PC-9 (cell line): ENCODE measurements at regions of chr1 and their contacts with region 1.

Region 1: GRCh38 chr1:94335950-94336349 is 82.2 kb upstream of the ABCD3 start:
- DNase-seq: peak; percentile 67 to 95
- H3K4me3 ChIP-seq: no peak overlapping the region
- H3K27ac ChIP-seq: peak overlapping the region; percentile 22; the same call in 1 of the 2 replicates
- H3K4me1 ChIP-seq: peaks cover 55% of the 10 kb centered on the region
- H3K27me3 ChIP-seq: no peaks in the 10 kb centered on the region
- CTCF ChIP-seq: peak; percentile 99

Region 2: DNA sequence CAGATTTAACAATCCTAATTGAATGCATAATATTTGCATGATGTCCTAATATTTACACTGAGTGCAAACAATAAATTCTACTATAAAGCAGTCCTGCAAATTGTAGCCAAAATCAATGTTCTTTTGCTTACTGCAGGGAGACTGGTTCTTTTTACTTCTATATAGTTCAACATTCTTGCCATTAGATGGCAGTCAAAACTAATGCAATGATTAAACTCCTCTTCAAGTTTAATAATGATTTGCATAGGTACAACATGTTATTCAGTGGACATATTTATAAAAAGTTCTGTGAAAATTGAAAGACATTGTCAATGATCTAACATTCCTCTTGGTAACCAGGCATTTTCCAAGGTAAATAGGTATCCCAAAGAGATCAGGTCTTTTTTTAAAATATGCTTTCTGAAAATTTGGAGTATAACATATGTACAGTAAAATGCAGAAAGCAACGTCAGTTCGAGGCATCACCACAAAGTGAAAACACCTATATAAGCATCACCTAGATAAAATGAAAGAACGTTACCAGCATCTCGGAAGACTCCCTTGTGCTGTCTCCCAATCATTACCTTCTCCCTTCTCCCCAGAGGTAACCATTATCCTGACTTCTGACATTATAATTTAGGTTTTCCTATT is 897.9 kb before region 1 on chr1:
- CTCF ChIA-PET with region 1: no interaction called
- POLR2A ChIA-PET with region 1: no interaction called
- intact Hi-C with region 1: loop called (anchors 2 kb)
- DNase-seq: peak in 1 of 2 experiments; percentile 70
- H3K4me3 ChIP-seq: no peak overlapping the region
- H3K27ac ChIP-seq: no peak overlapping the region
- H3K4me1 ChIP-seq: peaks cover 14% of the 10 kb centered on the region
- H3K27me3 ChIP-seq: no peaks in the 10 kb centered on the region
- CTCF ChIP-seq: peak; percentile 96

Region 3: DNA sequence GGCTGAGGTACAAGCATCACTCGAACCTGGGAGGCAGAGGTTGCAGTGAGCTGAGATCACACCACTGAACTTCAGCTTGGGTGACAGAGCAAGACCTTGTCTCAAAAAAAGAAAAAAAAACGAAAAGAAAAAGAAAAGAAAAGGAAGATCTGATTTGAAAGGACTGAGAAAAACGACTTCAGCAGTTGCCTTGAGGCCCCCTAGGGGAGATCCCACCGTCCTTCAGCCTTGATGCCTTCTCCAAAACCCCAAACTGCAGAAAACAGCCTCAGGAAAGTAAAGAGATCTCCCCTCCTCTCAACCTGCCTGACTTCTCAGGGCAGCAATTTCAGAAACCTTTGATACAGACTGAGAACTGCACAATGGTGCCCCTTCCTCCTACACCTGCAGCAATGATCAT is 603.4 kb before region 1 on chr1:
- CTCF ChIA-PET with region 1: no interaction called
- POLR2A ChIA-PET with region 1: no interaction called
- intact Hi-C with region 1: no loop called
- DNase-seq: no peak
- H3K4me3 ChIP-seq: no peak overlapping the region
- H3K27ac ChIP-seq: no peak overlapping the region
- H3K4me1 ChIP-seq: peaks cover 17% of the 10 kb centered on the region
- H3K27me3 ChIP-seq: no peaks in the 10 kb centered on the region
- CTCF ChIP-seq: peak; percentile 28; the same call in 1 of the 2 replicates

Region 4: GRCh38 chr1:93909146-93910050 is 426.6 kb before region 1 on chr1 and contains the start of gene GCLM:
- CTCF ChIA-PET with region 1: no interaction called
- POLR2A ChIA-PET with region 1: no interaction called
- intact Hi-C with region 1: loop called (anchors 1 kb)
- DNase-seq: peak; percentile 94 to 97
- H3K4me3 ChIP-seq: peak within 1 kb of the TSS; percentile 68
- H3K27ac ChIP-seq: peak within 1 kb of the TSS; percentile 80
- H3K4me1 ChIP-seq: peaks cover 32% of the 10 kb centered on the region
- H3K27me3 ChIP-seq: no peaks in the 10 kb centered on the region
- CTCF ChIP-seq: peak; percentile 80
- total RNA-seq, gene GCLM: 270 and 272 TPM in 2 replicates

Region 5: DNA sequence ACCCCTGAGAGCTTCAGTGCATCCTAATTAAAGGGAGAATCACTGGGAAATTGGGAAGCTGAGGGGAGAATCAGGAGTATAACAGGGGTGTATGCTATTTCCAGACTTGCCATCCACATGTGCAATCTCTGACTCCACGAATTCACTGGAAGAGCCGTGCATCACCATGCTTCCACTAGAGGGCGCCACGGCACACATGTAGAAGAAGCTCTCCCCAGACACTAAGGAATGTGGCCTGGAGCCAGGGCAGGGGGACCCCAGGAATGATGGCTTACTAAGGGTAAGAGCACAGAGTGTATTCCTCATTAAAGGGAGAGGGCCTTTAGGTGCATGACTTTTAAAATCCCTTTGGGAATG is 296.5 kb before region 1 on chr1:
- CTCF ChIA-PET with region 1: interaction called, 17 read pairs
- POLR2A ChIA-PET with region 1: no interaction called
- intact Hi-C with region 1: no loop called
- DNase-seq: peak; percentile 63 to 68
- H3K4me3 ChIP-seq: no peak overlapping the region
- H3K27ac ChIP-seq: no peak overlapping the region
- H3K4me1 ChIP-seq: peaks cover 40% of the 10 kb centered on the region
- H3K27me3 ChIP-seq: no peaks in the 10 kb centered on the region
- CTCF ChIP-seq: peak; percentile 99

Region 6: GRCh38 chr1:94061513-94062443 is 274.2 kb before region 1 on chr1:
- CTCF ChIA-PET with region 1: interaction called, 16 read pairs
- POLR2A ChIA-PET with region 1: interaction called, 3 read pairs
- intact Hi-C with region 1: loop called (anchors 1 kb)
- DNase-seq: peak; percentile 65 to 83
- H3K4me3 ChIP-seq: no peak overlapping the region
- H3K27ac ChIP-seq: peak overlapping the region; percentile 52
- H3K4me1 ChIP-seq: peaks cover 44% of the 10 kb centered on the region
- H3K27me3 ChIP-seq: no peaks in the 10 kb centered on the region
- CTCF ChIP-seq: peak; percentile 95

Region 7: DNA sequence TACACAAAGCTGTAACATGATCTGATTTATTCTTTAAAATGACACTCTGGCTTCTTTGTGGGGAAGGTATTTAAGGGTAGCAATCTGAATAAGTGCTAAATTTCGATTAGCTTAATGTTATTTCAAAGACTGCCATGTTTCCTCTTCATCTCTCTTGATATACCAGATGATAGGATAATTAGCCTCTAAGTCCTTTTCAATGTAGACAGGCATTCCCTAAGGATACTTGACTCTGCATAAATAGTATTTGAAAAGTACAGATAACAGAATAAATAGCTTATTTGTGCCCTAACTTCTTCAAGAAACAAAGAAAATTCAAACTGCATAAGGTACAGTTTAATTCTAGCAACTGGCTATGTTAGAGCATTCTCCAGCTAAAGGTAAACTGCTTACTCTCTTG is 144.7 kb before region 1 on chr1:
- CTCF ChIA-PET with region 1: interaction called, 4 read pairs
- POLR2A ChIA-PET with region 1: no interaction called
- intact Hi-C with region 1: loop called (anchors 5 kb)
- DNase-seq: no peak
- H3K4me3 ChIP-seq: no peak overlapping the region
- H3K27ac ChIP-seq: peak overlapping the region; percentile 40
- H3K4me1 ChIP-seq: peaks cover 3% of the 10 kb centered on the region; the same call in 1 of the 2 replicates
- H3K27me3 ChIP-seq: no peaks in the 10 kb centered on the region
- CTCF ChIP-seq: no peak

Region 8: GRCh38 chr1:94319319-94320180 is 16.4 kb before region 1 on chr1:
- CTCF ChIA-PET with region 1: no interaction called
- POLR2A ChIA-PET with region 1: no interaction called
- intact Hi-C with region 1: no loop called
- DNase-seq: no peak
- H3K4me3 ChIP-seq: no peak overlapping the region
- H3K27ac ChIP-seq: no peak overlapping the region
- H3K4me1 ChIP-seq: peaks cover 50% of the 10 kb centered on the region
- H3K27me3 ChIP-seq: no peaks in the 10 kb centered on the region
- CTCF ChIP-seq: no peak

Region 9: GRCh38 chr1:94417978-94418663 is 82.2 kb after region 1 on chr1 and contains the start of gene ABCD3:
- CTCF ChIA-PET with region 1: no interaction called
- POLR2A ChIA-PET with region 1: no interaction called
- intact Hi-C with region 1: loop called (anchors 5 kb)
- DNase-seq: peak; percentile 94 to 98
- H3K4me3 ChIP-seq: peak within 1 kb of the TSS; percentile 91
- H3K27ac ChIP-seq: peak within 1 kb of the TSS; percentile 45
- H3K4me1 ChIP-seq: peaks cover 47% of the 10 kb centered on the region
- H3K27me3 ChIP-seq: no peaks in the 10 kb centered on the region
- CTCF ChIP-seq: no peak
- total RNA-seq, gene ABCD3: 41.7 and 51.6 TPM in 2 replicates

Region 10: DNA sequence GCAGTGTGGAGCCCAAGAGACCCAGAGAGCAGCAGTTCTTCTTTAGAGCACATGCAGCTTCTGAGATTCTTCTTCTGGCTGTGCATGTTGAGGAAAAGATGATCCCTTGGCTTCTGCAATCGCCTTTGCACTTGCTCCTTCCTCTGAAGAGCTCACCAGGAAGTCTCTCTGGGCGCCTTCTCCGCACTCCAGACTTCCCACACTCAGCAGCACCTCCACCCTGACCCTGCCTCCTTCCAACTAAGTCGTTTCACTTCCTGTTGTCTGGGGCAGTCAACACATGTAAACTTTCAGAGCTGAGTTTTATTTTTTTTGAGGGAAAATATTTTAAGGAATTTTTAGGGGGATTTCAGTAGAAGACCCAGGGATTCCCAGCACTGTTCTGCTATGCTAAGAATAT is 279.0 kb after region 1 on chr1:
- CTCF ChIA-PET with region 1: no interaction called
- POLR2A ChIA-PET with region 1: no interaction called
- intact Hi-C with region 1: no loop called
- DNase-seq: no peak
- H3K4me3 ChIP-seq: no peak overlapping the region
- H3K27ac ChIP-seq: no peak overlapping the region
- H3K4me1 ChIP-seq: peaks cover 61% of the 10 kb centered on the region
- H3K27me3 ChIP-seq: no peaks in the 10 kb centered on the region
- CTCF ChIP-seq: no peak

Region 11: GRCh38 chr1:94648225-94649007 is 312.5 kb after region 1 on chr1:
- CTCF ChIA-PET with region 1: no interaction called
- POLR2A ChIA-PET with region 1: no interaction called
- intact Hi-C with region 1: no loop called
- DNase-seq: peak; percentile 79 to 100
- H3K4me3 ChIP-seq: peak overlapping the region; percentile 32; the same call in 1 of the 2 replicates
- H3K27ac ChIP-seq: peak overlapping the region; percentile 97
- H3K4me1 ChIP-seq: peaks cover 84% of the 10 kb centered on the region
- H3K27me3 ChIP-seq: no peaks in the 10 kb centered on the region
- CTCF ChIP-seq: no peak